ENCODE measurements at regions of chr21 and their contacts with region 1.

Region 1: DNA sequence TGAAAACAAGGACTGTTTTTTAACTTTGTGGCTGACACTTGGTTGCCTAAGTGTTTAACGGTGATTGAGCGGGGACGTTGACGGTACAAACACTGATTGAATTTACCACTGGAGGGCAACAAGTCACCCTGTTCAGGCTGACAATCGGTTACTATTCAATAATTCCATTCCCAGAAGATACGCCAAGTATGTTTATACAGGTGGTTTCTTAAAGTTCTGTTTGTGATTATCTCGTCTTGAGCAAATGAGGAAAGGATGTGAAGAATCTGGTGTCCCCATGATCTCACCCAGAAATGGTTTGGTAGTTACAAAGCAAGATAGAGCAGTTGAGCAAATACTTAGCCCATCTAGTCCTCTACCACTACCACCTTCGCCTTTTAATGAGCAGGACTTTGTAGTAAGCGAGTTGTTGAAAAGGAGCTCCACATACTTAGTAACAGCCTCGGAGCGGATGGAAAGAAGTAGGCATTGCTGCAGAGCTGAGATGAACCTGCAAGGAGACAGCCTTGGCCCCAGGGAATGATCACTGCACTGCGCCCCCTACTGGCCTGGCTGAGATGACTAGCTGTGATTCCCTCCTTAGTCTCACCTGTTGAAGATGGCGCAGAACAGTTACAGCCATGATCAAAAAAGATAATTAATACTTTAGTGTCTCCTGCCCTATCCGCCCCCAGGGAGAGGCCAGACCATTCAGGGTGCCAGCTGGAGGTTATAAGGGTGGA is 36.3 kb downstream of the IFNAR1 start:
- DNase-seq: peak; percentile 76 to 88 (median 84)
- ATAC-seq: peak; percentile 86
- H3K4me3 ChIP-seq: peak overlapping the region; percentile 76
- H3K4me3 Mint-ChIP-seq: peak overlapping the region; percentile 81 to 96 (median 88)
- H3K27ac ChIP-seq: peak overlapping the region; percentile 63
- H3K27ac Mint-ChIP-seq: peak overlapping the region; percentile 76 to 97 (median 92)
- H3K4me1 ChIP-seq: peaks cover 7 to 12% of the 10 kb centered on the region in 2 donors
- H3K4me1 Mint-ChIP-seq: peaks cover 14 to 25% (median 20%) of the 10 kb centered on the region in 7 donors
- H3K27me3 ChIP-seq: no peaks in the 10 kb centered on the region
- H3K27me3 Mint-ChIP-seq: no peaks in the 10 kb centered on the region

Region 2: DNA sequence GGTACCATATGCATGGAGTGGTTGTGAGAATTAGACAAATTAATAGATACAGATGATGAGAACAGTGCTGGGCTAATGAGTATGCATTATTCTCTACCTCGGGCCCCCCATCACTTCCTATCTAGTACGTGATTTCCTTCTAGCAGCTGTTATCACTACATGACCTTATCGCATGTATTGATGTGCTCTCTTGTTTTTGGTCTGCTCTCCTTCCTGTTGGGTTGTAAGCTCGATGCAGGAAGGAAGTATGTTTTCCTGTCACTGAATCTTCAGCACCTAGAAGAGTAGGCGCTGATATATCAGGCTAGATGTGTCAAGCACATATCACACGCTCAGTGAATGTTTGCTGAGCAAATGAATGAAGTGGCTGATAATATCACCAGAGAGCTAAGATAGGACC is 175.2 kb before region 1 on chr21:
- CTCF ChIA-PET with region 1: interaction called, 4 read pairs
- POLR2A ChIA-PET with region 1: interaction called, 12 read pairs
- intact Hi-C with region 1: no loop called
- DNase-seq: peak in 7 of 9 donors; percentile 40 to 75 (median 65)
- ATAC-seq: peak; percentile 94
- H3K4me3 ChIP-seq: peak overlapping the region; percentile 39
- H3K4me3 Mint-ChIP-seq: peak overlapping the region; percentile 45 to 86 (median 70)
- H3K27ac ChIP-seq: no peak overlapping the region
- H3K27ac Mint-ChIP-seq: peak overlapping the region; percentile 72 to 94 (median 90)
- H3K4me1 ChIP-seq: peaks cover 24 to 27% of the 10 kb centered on the region in 2 donors
- H3K4me1 Mint-ChIP-seq: peaks cover 27 to 70% (median 54%) of the 10 kb centered on the region in 7 donors
- H3K27me3 ChIP-seq: no peaks in the 10 kb centered on the region
- H3K27me3 Mint-ChIP-seq: peaks cover 0 to 21% (median 0%) of the 10 kb centered on the region in 5 donors

Region 3: DNA sequence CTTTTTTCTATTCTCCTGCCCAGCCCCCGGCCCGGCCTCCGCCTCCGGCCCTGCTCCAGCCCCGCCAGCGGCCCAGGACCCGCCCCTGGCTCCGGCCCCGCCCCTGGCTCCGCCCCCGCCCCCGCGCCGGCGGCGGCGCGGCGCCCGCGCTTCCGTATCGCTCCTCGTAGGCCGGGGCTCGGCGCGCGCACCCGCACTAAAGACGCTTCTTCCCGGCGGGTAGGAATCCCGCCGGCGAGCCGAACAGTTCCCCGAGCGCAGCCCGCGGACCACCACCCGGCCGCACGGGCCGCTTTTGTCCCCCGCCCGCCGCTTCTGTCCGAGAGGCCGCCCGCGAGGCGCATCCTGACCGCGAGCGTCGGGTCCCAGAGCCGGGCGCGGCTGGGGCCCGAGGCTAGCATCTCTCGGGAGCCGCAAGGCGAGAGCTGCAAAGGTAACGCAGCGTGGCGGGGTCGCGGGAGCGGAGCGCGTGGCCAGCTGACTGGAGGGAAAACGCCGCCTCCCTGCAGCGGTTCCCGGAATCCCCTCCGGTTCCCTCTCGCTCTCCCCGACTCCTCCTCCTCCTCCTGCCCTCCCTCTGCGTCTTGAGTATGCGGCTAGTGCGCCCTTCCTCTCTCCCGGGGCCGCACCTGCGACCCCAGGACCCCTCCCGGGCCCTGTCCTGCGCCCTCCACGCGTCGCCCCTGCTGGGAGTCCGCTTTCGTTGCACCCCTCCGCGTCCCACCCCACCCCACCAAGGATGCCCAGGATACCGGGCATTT is 131.1 kb before region 1 on chr21 and contains the start of gene IFNAR2:
- CTCF ChIA-PET with region 1: interaction called, 4 read pairs
- POLR2A ChIA-PET with region 1: interaction called, 9 read pairs
- intact Hi-C with region 1: loop called (anchors 1 to 10 kb)
- DNase-seq: peak; percentile 55 to 82 (median 68)
- ATAC-seq: peak; percentile 93
- H3K4me3 ChIP-seq: peak within 1 kb of the TSS; percentile 83
- H3K4me3 Mint-ChIP-seq: peak within 1 kb of the TSS; percentile 88 to 97 (median 92)
- H3K27ac ChIP-seq: peak within 1 kb of the TSS; percentile 92
- H3K27ac Mint-ChIP-seq: peak within 1 kb of the TSS; percentile 83 to 98 (median 90)
- H3K4me1 ChIP-seq: peaks cover 22 to 40% of the 10 kb centered on the region in 2 donors
- H3K4me1 Mint-ChIP-seq: peaks cover 35 to 59% (median 51%) of the 10 kb centered on the region in 7 donors
- H3K27me3 ChIP-seq: no peaks in the 10 kb centered on the region
- H3K27me3 Mint-ChIP-seq: no peaks in the 10 kb centered on the region
- total RNA-seq, gene IFNAR2: 44.9 to 85.8 (median 60.8) TPM

Region 4: GRCh38 chr21:33293811-33294216 is 67.2 kb before region 1 on chr21:
- CTCF ChIA-PET with region 1: interaction called, 8 read pairs
- POLR2A ChIA-PET with region 1: interaction called, 18 read pairs
- intact Hi-C with region 1: loop called in 1 of 2 experiments (anchors 2 kb)
- DNase-seq: peak in 7 of 9 donors; percentile 26 to 74 (median 63)
- ATAC-seq: peak; percentile 75
- H3K4me3 ChIP-seq: no peak overlapping the region
- H3K4me3 Mint-ChIP-seq: peak overlapping the region in 9 of 10 donors; percentile 48 to 84 (median 73)
- H3K27ac ChIP-seq: peak overlapping the region; percentile 53
- H3K27ac Mint-ChIP-seq: peak overlapping the region; percentile 60 to 96 (median 87)
- H3K4me1 ChIP-seq: peaks cover under 1 to 28% of the 10 kb centered on the region in 2 donors
- H3K4me1 Mint-ChIP-seq: peaks cover 22 to 52% (median 44%) of the 10 kb centered on the region in 7 donors
- H3K27me3 ChIP-seq: no peaks in the 10 kb centered on the region
- H3K27me3 Mint-ChIP-seq: no peaks in the 10 kb centered on the region

Region 5: GRCh38 chr21:33332143-33332542 is 28.9 kb before region 1 on chr21:
- CTCF ChIA-PET with region 1: interaction called, 18 read pairs
- POLR2A ChIA-PET with region 1: interaction called, 35 read pairs
- intact Hi-C with region 1: no loop called
- DNase-seq: peak in 2 of 9 donors; percentile 18 to 20
- ATAC-seq: peak; percentile 38
- H3K4me3 ChIP-seq: no peak overlapping the region
- H3K4me3 Mint-ChIP-seq: peak overlapping the region in 9 of 10 donors; percentile 22 to 68 (median 52)
- H3K27ac ChIP-seq: peak overlapping the region; percentile 37
- H3K27ac Mint-ChIP-seq: peak overlapping the region in 8 of 9 donors; percentile 14 to 83 (median 60)
- H3K4me1 ChIP-seq: peaks cover 15 to 38% of the 10 kb centered on the region in 2 donors
- H3K4me1 Mint-ChIP-seq: peaks cover 7 to 73% (median 49%) of the 10 kb centered on the region in 7 donors
- H3K27me3 ChIP-seq: no peaks in the 10 kb centered on the region
- H3K27me3 Mint-ChIP-seq: no peaks in the 10 kb centered on the region

Region 6: GRCh38 chr21:33380483-33380998 is 19.5 kb after region 1 on chr21:
- CTCF ChIA-PET with region 1: interaction called, 9 read pairs
- POLR2A ChIA-PET with region 1: interaction called, 31 read pairs
- intact Hi-C with region 1: loop called (anchors 1 kb)
- DNase-seq: peak; percentile 46 to 81 (median 63)
- ATAC-seq: peak; percentile 78
- H3K4me3 ChIP-seq: peak overlapping the region; percentile 0
- H3K4me3 Mint-ChIP-seq: peak overlapping the region; percentile 34 to 98 (median 66)
- H3K27ac ChIP-seq: peak overlapping the region; percentile 53
- H3K27ac Mint-ChIP-seq: peak overlapping the region; percentile 69 to 91 (median 87)
- H3K4me1 ChIP-seq: peaks cover 45 to 60% of the 10 kb centered on the region in 2 donors
- H3K4me1 Mint-ChIP-seq: peaks cover 48 to 70% (median 63%) of the 10 kb centered on the region in 7 donors
- H3K27me3 ChIP-seq: peaks cover 0 to 6% of the 10 kb centered on the region in 2 donors
- H3K27me3 Mint-ChIP-seq: peaks cover 0 to 40% (median 0%) of the 10 kb centered on the region in 5 donors

Region 7: DNA sequence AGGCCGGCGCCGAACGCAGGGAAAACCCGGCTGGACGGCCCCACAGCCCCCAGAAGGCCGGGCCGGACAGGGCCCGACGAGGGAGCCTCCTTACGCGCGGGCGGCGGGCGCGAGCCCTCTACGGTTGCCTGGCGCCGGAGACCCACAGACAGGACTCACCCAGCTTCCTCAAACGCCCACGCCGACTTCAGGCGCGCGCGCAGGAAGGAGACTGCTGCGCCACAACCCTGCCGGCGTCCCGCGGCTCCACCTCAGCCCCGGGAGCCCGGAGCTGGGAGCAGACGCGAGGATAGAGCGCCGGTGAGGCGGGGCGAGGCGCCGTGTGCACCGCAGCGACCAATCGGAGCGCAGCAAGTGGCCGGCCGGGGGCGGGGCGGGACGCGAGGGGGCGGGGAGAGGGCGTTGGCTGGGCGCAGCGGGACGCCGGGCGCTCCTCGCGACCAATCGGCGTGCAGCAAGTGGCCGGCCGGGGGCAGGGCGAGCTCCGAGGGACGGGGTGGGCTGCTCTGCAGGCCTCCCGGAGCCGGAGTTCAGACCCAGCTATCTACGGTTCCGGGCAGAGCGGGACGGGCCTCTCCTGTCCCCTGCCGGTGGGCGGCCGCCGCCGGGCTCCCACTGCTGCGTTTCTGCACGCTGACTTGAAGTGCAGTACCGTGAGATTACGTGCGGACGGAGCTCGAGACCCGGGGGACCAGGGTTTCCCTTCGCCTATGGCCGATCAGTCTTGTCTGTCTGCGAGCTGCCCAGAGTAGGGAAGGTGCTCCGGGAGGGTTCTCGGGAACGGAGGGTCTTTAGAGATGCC is 118.8 kb after region 1 on chr21 and contains the start of gene TMEM50B:
- CTCF ChIA-PET with region 1: no interaction called
- POLR2A ChIA-PET with region 1: interaction called, 16 read pairs
- intact Hi-C with region 1: no loop called
- DNase-seq: peak; percentile 85 to 96 (median 94)
- ATAC-seq: peak; percentile 95
- H3K4me3 ChIP-seq: peak within 1 kb of the TSS; percentile 70
- H3K4me3 Mint-ChIP-seq: peak within 1 kb of the TSS; percentile 87 to 96 (median 96)
- H3K27ac ChIP-seq: peak within 1 kb of the TSS; percentile 89
- H3K27ac Mint-ChIP-seq: peak within 1 kb of the TSS; percentile 90 to 99 (median 95)
- H3K4me1 ChIP-seq: peaks cover 0 to 5% of the 10 kb centered on the region in 2 donors
- H3K4me1 Mint-ChIP-seq: peaks cover 7 to 33% (median 21%) of the 10 kb centered on the region in 7 donors
- H3K27me3 ChIP-seq: no peaks in the 10 kb centered on the region
- H3K27me3 Mint-ChIP-seq: peaks cover 0 to 15% (median 0%) of the 10 kb centered on the region in 5 donors
- total RNA-seq, gene TMEM50B: 38.3 to 108 (median 61.7) TPM

Region 8: DNA sequence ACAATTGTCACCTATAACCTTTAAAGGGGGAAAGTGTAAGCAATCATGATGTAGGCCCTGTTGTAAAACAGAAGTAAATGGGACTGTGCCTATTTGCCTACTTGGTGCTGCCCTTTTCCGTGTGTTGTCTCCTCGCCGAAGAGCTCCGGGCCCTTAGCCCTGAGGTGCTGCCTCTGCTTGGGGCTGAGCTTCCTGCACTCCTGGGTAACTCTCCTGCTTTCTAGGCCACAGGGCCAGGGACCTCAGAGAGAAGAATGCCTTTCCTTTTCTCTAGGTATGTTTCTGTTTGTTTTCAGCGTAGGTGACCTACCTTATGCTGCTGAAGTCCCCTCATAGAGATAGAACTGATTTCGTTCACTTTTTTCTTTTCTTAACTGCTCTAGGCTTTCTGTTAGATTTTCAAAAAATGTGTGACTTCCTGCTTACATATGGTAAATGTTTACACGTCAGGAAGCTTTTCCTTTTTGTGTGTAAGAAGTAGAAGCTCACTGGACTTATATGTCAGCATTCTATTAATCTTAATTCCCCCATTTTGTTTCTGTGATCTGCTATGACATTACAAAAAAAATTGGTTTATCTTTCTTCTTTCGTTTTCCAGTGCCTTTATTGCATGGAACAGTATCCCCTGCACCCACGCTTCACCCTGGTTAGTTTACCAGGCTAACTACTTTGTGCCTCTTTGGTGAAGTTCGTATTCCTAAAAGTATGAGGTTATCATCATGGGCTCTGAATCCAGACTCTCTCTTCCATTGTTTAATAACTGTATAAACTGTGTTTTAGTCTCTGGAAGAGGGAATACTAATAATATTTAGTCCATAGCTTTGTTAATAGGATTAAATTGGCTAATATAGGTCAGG is 342.9 kb after region 1 on chr21:
- CTCF ChIA-PET with region 1: no interaction called
- POLR2A ChIA-PET with region 1: no interaction called
- intact Hi-C with region 1: no loop called
- DNase-seq: peak in 1 of 9 donors; percentile 2
- ATAC-seq: no peak
- H3K4me3 ChIP-seq: peak overlapping the region; percentile 31
- H3K4me3 Mint-ChIP-seq: peak overlapping the region in 5 of 10 donors; percentile 34 to 62 (median 46)
- H3K27ac ChIP-seq: no peak overlapping the region
- H3K27ac Mint-ChIP-seq: peak overlapping the region in 8 of 9 donors; percentile 5 to 75 (median 60)
- H3K4me1 ChIP-seq: peaks cover 0 to 9% of the 10 kb centered on the region in 2 donors
- H3K4me1 Mint-ChIP-seq: peaks cover 0 to 13% (median 12%) of the 10 kb centered on the region in 7 donors
- H3K27me3 ChIP-seq: no peaks in the 10 kb centered on the region
- H3K27me3 Mint-ChIP-seq: peaks cover 0 to 2% (median 0%) of the 10 kb centered on the region in 5 donors